AG04450 (cell line): ENCODE measurements at regions of chr17 and their contacts with region 1.

Region 1: GRCh38 chr17:73311781-73312641 is at the start of gene CDC42EP4:
- DNase-seq: no peak
- H3K4me3 ChIP-seq: peak within 1 kb of the TSS; percentile 93
- H3K27ac ChIP-seq: peak within 1 kb of the TSS; percentile 90
- H3K27me3 ChIP-seq: no peaks in the 10 kb centered on the region
- CTCF ChIP-seq: no peak
- polyA plus RNA-seq, gene CDC42EP4: 21.9 and 23.1 TPM in 2 replicates

Region 2: DNA sequence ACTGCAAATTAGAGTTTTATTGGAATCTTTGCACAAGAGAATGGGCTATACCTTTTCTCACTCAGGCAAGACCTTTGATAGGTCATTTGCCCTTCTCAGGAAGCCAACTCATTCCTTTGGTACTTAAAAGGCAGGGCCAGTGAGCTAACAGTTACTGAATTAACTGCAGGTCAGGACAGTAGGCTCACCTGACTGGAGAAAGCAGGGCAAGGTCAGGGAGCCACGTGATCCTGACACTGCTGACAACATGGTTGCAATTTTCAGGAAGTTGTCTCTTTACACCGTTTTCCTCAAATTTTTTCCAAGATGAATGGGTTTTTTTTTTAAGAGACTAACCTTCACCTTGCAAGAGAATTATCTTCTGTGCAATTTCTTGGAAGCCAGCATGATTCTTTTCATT is 71.5 kb before region 1 on chr17:
- CTCF ChIA-PET with region 1: no interaction called
- POLR2A ChIA-PET with region 1: no interaction called
- DNase-seq: no peak
- H3K4me3 ChIP-seq: no peak overlapping the region
- H3K27ac ChIP-seq: no peak overlapping the region
- H3K27me3 ChIP-seq: no peaks in the 10 kb centered on the region
- CTCF ChIP-seq: no peak

Region 3: GRCh38 chr17:73342050-73342522 is 30.1 kb after region 1 on chr17:
- CTCF ChIA-PET with region 1: interaction called, 23 read pairs
- POLR2A ChIA-PET with region 1: interaction called, 13 read pairs
- DNase-seq: no peak
- H3K4me3 ChIP-seq: no peak overlapping the region
- H3K27ac ChIP-seq: peak overlapping the region; percentile 92
- H3K27me3 ChIP-seq: no peaks in the 10 kb centered on the region
- CTCF ChIP-seq: no peak

Region 4: DNA sequence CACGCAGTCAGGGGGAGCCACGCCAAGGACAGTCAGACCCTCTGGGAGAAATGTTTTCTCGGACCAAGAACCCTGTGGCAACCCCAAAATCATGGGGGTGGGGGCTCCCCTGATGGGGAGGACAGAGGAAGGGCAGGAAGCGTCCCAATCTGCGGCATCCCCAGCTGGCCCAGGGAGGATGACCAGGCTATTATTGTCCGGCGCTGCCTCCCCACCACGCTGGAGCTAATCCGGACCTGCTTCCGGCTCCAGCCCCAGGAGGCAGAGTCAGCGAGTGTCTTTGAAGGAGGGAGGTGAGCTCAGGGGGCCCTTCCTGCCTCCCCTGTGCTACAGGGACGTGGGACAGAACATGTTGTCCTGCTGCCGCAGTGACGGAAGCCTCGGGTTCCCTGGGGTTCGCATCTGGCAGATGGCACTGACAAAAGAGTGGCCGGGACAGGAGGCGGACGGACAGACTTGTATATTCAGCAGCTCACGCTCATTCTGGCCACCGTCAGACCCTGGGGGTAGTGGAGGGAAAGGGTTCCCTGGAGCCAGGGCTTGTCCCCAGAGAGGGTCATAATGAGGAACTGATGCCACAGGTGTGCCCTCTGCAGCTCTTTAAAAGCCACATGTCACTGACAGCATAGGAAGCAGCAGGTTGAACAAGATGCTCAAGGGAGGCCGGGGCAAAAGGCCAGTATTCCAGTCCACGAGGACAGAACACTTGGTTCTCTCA is 54.1 kb after region 1 on chr17:
- CTCF ChIA-PET with region 1: interaction called, 29 read pairs
- POLR2A ChIA-PET with region 1: interaction called, 5 read pairs
- DNase-seq: no peak
- H3K4me3 ChIP-seq: no peak overlapping the region
- H3K27ac ChIP-seq: no peak overlapping the region
- H3K27me3 ChIP-seq: peaks cover 12% of the 10 kb centered on the region
- CTCF ChIP-seq: no peak